ENCODE measurements at regions of chr10 and their contacts with region 1.

Region 1: DNA sequence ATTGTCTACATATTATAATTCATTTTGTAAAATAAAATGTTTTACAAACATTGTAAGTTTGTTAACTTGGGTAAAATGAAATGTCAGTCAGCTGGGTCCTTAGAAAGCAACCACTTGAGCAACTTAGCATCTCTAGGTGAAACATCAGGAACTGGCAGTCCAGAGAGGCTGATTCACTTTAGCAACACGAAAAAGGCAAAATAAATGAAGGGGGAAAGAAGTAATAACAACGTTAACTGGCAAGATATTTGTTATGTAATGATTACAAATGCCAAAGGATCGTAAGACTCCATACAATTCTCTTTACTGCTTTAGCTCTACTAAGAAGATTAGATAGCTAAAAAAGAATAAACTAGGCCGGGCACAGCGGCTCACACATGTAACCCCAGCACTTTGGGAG is 5.0 kb downstream of the PDZD8 start:
- DNase-seq: no peak
- ATAC-seq: no peak
- H3K4me3 ChIP-seq: no peak overlapping the region
- H3K27ac ChIP-seq: no peak overlapping the region
- H3K4me1 ChIP-seq: peaks cover 11% of the 10 kb centered on the region
- H3K27me3 ChIP-seq: no peaks in the 10 kb centered on the region
- CTCF ChIP-seq: no peak
- EP300 ChIP-seq: no peak
- POLR2A ChIP-seq: no peak
- RAD21 ChIP-seq: no peak

Region 2: DNA sequence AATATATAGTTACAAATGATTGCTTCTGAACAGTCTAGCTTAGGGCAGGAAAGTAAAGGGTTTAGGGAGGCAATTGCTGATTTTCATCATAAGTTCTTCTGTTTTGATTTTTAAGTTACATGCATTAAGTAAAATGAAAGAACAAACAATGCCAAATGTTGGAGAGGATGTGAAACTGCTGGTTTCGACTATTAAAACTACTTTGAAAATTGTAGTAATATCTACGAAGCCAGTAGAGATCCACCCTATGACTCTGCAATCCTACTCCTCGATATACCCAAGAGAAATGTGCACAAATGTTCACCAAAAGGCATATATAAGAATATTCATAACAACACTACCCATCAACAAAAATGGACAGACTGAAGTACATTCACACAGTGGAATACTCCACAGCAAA is 19.3 kb before region 1 on chr10:
- CTCF ChIA-PET with region 1: interaction called, 11 read pairs
- POLR2A ChIA-PET with region 1: interaction called, 8 read pairs
- RAD21 ChIA-PET with region 1: interaction called, 4 read pairs
- SMC1A ChIA-PET with region 1: interaction called, 24 read pairs
- in situ Hi-C with region 1: no loop called
- intact Hi-C with region 1: no loop called
- DNase-seq: no peak
- ATAC-seq: peak; percentile 72
- H3K4me3 ChIP-seq: no peak overlapping the region
- H3K27ac ChIP-seq: peak overlapping the region; percentile 46
- H3K4me1 ChIP-seq: peaks cover 5% of the 10 kb centered on the region; the same call in 1 of the 2 replicates
- H3K27me3 ChIP-seq: no peaks in the 10 kb centered on the region
- CTCF ChIP-seq: no peak
- EP300 ChIP-seq: no peak
- POLR2A ChIP-seq: no peak
- RAD21 ChIP-seq: no peak

Region 3: GRCh38 chr10:119207367-119207668 is 1837.1 kb after region 1 on chr10 and contains the start of gene GRK5:
- CTCF ChIA-PET with region 1: no interaction called
- POLR2A ChIA-PET with region 1: no interaction called
- RAD21 ChIA-PET with region 1: no interaction called
- SMC1A ChIA-PET with region 1: no interaction called
- in situ Hi-C with region 1: no loop called
- intact Hi-C with region 1: no loop called
- DNase-seq: peak; percentile 86
- ATAC-seq: peak; percentile 85
- H3K4me3 ChIP-seq: peak within 1 kb of the TSS; percentile 80
- H3K27ac ChIP-seq: peak within 1 kb of the TSS; percentile 85
- H3K4me1 ChIP-seq: peaks cover 11% of the 10 kb centered on the region
- H3K27me3 ChIP-seq: no peaks in the 10 kb centered on the region
- CTCF ChIP-seq: no peak
- EP300 ChIP-seq: no peak
- POLR2A ChIP-seq: peak; percentile 84
- RAD21 ChIP-seq: no peak
- polyA plus RNA-seq, gene GRK5: 0.11 to 0.86 TPM